Gastrocnemius medialis (tissue), 4 donors: ENCODE measurements at regions of chr15 and their contacts with region 1.

Region 1: DNA sequence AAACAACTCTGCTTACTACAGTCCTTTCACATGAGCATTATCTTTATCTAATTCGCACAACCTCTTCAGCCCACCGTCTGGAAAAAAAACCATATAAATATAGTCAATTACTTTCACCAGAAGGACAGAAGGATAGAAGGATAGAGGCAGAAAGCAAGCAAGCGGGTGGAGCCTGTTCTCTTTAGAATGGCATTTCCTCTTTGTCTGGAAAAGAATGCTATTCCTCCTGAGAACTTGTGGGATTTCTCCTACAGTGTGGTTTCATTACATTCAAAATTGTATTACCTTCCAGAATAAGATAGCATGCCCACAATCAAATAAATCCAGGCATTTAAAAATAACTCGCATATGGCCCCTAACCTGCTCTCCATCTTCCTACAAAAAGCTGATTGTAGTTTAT is 23.1 kb downstream of the SLC30A4 start:
- DNase-seq: no peak
- ATAC-seq: no peak
- H3K4me3 ChIP-seq: no peak overlapping the region
- H3K27ac ChIP-seq: no peak overlapping the region
- H3K4me1 ChIP-seq: no peaks in the 10 kb centered on the region
- H3K27me3 ChIP-seq: no peaks in the 10 kb centered on the region
- CTCF ChIP-seq: no peak
- POLR2A ChIP-seq: no peak

Region 2: GRCh38 chr15:45468294-45468693 is 31.1 kb before region 1 on chr15:
- in situ Hi-C with region 1: no loop called
- intact Hi-C with region 1: no loop called
- DNase-seq: no peak
- ATAC-seq: no peak
- H3K4me3 ChIP-seq: no peak overlapping the region
- H3K27ac ChIP-seq: no peak overlapping the region
- H3K4me1 ChIP-seq: no peaks in the 10 kb centered on the region
- H3K27me3 ChIP-seq: peaks cover 5 to 10% (median 9%) of the 10 kb centered on the region in 3 donors
- CTCF ChIP-seq: no peak
- POLR2A ChIP-seq: no peak

Region 3: GRCh38 chr15:45573961-45574629 is 74.7 kb after region 1 on chr15:
- in situ Hi-C with region 1: loop called in 1 of 4 experiments (anchors 10 kb)
- intact Hi-C with region 1: no loop called
- DNase-seq: no peak
- ATAC-seq: no peak
- H3K4me3 ChIP-seq: no peak overlapping the region
- H3K27ac ChIP-seq: no peak overlapping the region
- H3K4me1 ChIP-seq: peaks cover 0 to 4% of the 10 kb centered on the region in 2 donors
- H3K27me3 ChIP-seq: no peaks in the 10 kb centered on the region
- CTCF ChIP-seq: no peak
- POLR2A ChIP-seq: no peak